ENCODE measurements at regions of chr9 and their contacts with region 1.

Region 1: DNA sequence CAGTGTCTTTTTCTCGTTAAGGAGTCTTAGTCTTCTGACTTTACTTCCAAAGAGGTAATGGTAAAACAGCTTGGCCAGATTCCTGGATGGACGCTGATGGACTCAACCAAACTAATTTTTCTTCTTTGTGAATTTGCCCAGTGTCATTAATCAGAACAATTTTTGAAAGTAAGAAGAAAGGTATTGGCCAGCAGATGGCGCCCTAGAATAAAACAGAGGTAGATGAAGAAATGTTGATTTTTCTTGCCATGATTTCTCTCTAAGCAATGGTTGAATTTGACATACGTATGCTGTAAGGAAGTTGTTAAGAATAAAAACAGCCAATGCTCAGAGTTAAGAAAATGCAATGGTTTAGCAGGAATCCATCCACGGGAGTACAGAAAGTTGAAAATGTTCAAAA is 500.0 kb downstream of the DIRAS2 start:
- DNase-seq: peak; percentile 80
- H3K4me3 ChIP-seq: no peak overlapping the region
- H3K27ac ChIP-seq: no peak overlapping the region
- H3K4me1 ChIP-seq: no peaks in the 10 kb centered on the region
- H3K27me3 ChIP-seq: no peaks in the 10 kb centered on the region
- CTCF ChIP-seq: peak; percentile 57

Region 2: GRCh38 chr9:89634995-89635742 is 507.4 kb before region 1 on chr9:
- intact Hi-C with region 1: no loop called
- DNase-seq: no peak
- H3K4me3 ChIP-seq: no peak overlapping the region
- H3K27ac ChIP-seq: no peak overlapping the region
- H3K4me1 ChIP-seq: no peaks in the 10 kb centered on the region
- H3K27me3 ChIP-seq: no peaks in the 10 kb centered on the region
- CTCF ChIP-seq: no peak

Region 3: DNA sequence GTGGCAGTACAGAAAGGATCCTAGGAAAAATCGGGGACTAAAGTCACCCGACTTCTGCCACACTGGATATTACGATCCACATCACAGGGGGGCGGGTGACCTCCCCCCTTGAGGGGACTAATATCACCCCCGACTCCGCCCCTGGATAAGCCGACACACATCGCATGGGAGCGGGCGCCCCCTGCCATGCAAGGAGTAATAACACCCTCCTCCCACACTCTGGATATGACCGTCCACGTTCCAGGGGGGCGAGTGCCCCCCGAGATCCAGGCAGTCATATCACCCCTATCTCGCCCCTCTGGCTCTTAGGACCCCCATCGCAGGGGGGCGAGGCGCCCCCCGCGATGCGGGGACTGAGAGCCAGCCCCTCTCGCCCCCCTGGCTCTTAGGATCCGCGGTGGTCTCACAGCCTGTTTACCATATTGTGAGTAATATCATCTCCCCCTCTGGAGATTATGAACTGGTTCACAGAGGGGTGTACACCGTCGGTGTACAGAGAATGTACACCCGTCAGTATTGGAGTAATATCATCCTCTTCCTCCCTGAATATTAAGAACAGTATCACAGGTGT is 77.1 kb after region 1 on chr9:
- intact Hi-C with region 1: loop called (anchors 2 kb)
- DNase-seq: peak; percentile 52
- H3K4me3 ChIP-seq: no peak overlapping the region
- H3K27ac ChIP-seq: no peak overlapping the region
- H3K4me1 ChIP-seq: no peaks in the 10 kb centered on the region
- H3K27me3 ChIP-seq: no peaks in the 10 kb centered on the region
- CTCF ChIP-seq: peak; percentile 57

Region 4: GRCh38 chr9:90349907-90350306 is 207.3 kb after region 1 on chr9:
- intact Hi-C with region 1: no loop called
- DNase-seq: no peak
- H3K4me3 ChIP-seq: no peak overlapping the region
- H3K27ac ChIP-seq: no peak overlapping the region
- H3K4me1 ChIP-seq: no peaks in the 10 kb centered on the region
- H3K27me3 ChIP-seq: no peaks in the 10 kb centered on the region
- CTCF ChIP-seq: no peak

Region 5: GRCh38 chr9:90642570-90643539 is 500.3 kb after region 1 on chr9 and contains the start of gene DIRAS2:
- intact Hi-C with region 1: loop called (anchors 5 kb)
- DNase-seq: peak; percentile 27
- H3K4me3 ChIP-seq: peak within 1 kb of the TSS; percentile 37
- H3K27ac ChIP-seq: no peak within 1 kb of the TSS
- H3K4me1 ChIP-seq: no peaks in the 10 kb centered on the region
- H3K27me3 ChIP-seq: peaks cover 23% of the 10 kb centered on the region
- CTCF ChIP-seq: no peak
- total RNA-seq, gene DIRAS2: 0.40 TPM in 1 of 2 donors, not detected in the other

Region 6: GRCh38 chr9:90773617-90774016 is 631.0 kb after region 1 on chr9:
- intact Hi-C with region 1: loop called (anchors 10 kb)
- DNase-seq: peak; percentile 30
- H3K4me3 ChIP-seq: no peak overlapping the region
- H3K27ac ChIP-seq: no peak overlapping the region
- H3K4me1 ChIP-seq: no peaks in the 10 kb centered on the region
- H3K27me3 ChIP-seq: no peaks in the 10 kb centered on the region
- CTCF ChIP-seq: peak; percentile 18

Region 7: GRCh38 chr9:90870621-90871326 is 728.2 kb after region 1 on chr9:
- intact Hi-C with region 1: loop called (anchors 5 kb)
- DNase-seq: peak; percentile 41
- H3K4me3 ChIP-seq: no peak overlapping the region
- H3K27ac ChIP-seq: no peak overlapping the region
- H3K4me1 ChIP-seq: no peaks in the 10 kb centered on the region
- H3K27me3 ChIP-seq: no peaks in the 10 kb centered on the region
- CTCF ChIP-seq: peak; percentile 83

Measured in colonic mucosa (tissue), 4 donors.